Heart left ventricle (tissue), 16 donors: ENCODE measurements at regions of chr12 and their contacts with region 1.

Region 1: GRCh38 chr12:31629756-31630732 is 29.4 kb upstream of the ETFBKMT start:
- DNase-seq: peak in 4 of 5 donors; percentile 58 to 78 (median 64)
- ATAC-seq: peak; percentile 90 to 98 (median 96)
- H3K4me3 ChIP-seq: peak overlapping the region in 3 of 12 donors; percentile 19 to 24 (median 24)
- H3K27ac ChIP-seq: peak overlapping the region in 11 of 12 donors; percentile 37 to 65 (median 47)
- H3K4me1 ChIP-seq: peaks cover 0 to 17% (median 10%) of the 10 kb centered on the region in 12 donors
- H3K27me3 ChIP-seq: no peaks in the 10 kb centered on the region
- CTCF ChIP-seq: no peak
- POLR2A ChIP-seq: no peak

Region 2: DNA sequence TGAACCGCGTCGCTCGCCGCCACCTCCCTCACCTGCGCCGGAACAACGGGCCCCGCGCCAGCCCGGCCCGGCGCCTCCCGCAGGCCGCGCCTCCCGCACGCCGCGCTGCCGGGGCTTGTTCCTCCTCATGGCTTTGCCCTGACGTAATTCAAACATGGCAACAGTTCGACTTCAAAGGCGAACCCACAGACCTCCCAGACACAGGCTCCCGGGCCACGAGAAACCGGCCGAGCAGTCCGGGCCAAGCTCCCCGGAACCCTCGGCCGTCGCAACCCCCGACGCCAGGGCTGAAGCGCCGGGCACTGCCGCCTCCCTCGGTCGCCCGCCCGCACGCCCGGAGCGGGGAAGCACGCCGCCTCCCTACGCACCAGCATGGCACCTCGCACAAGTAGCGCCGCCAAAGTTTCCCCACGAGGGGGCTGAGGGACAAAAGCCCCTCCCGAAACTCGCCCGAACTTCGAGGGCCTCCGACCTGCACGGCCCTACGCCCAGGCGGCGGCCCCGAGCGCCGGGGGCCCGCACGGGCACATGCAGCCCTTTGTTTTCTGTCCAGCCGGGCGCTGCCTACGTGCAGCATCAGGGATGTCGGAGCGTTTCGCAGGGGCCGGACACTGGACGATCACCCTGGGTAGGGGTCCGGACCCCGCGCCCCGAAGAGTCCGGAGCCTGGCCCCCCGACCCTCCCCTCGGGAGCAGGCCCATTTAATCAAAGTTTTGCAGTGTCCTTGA is 305.8 kb before region 1 on chr12:
- intact Hi-C with region 1: no loop called
- DNase-seq: peak; percentile 56 to 81 (median 71)
- ATAC-seq: peak; percentile 3 to 40 (median 24)
- H3K4me3 ChIP-seq: peak overlapping the region; percentile 58 to 92 (median 76)
- H3K27ac ChIP-seq: peak overlapping the region; percentile 29 to 93 (median 68)
- H3K4me1 ChIP-seq: peaks cover 0 to 44% (median 6%) of the 10 kb centered on the region in 12 donors
- H3K27me3 ChIP-seq: no peaks in the 10 kb centered on the region
- CTCF ChIP-seq: peak in 1 of 12 donors; percentile 6
- POLR2A ChIP-seq: no peak

Region 3: GRCh38 chr12:31477687-31478086 is 152.4 kb before region 1 on chr12:
- intact Hi-C with region 1: loop called in 1 of 10 experiments (anchors 10 kb)
- DNase-seq: no peak
- ATAC-seq: no peak
- H3K4me3 ChIP-seq: no peak overlapping the region
- H3K27ac ChIP-seq: no peak overlapping the region
- H3K4me1 ChIP-seq: peaks cover 0 to 26% (median 4%) of the 10 kb centered on the region in 12 donors
- H3K27me3 ChIP-seq: no peaks in the 10 kb centered on the region
- CTCF ChIP-seq: no peak
- POLR2A ChIP-seq: no peak